Activated CD4-positive, alpha-beta T cell treated with anti-CD3 and anti-CD28 coated beads for 36 hours (primary cell): ENCODE measurements at regions of chr4 and their contacts with region 1.

Region 1: DNA sequence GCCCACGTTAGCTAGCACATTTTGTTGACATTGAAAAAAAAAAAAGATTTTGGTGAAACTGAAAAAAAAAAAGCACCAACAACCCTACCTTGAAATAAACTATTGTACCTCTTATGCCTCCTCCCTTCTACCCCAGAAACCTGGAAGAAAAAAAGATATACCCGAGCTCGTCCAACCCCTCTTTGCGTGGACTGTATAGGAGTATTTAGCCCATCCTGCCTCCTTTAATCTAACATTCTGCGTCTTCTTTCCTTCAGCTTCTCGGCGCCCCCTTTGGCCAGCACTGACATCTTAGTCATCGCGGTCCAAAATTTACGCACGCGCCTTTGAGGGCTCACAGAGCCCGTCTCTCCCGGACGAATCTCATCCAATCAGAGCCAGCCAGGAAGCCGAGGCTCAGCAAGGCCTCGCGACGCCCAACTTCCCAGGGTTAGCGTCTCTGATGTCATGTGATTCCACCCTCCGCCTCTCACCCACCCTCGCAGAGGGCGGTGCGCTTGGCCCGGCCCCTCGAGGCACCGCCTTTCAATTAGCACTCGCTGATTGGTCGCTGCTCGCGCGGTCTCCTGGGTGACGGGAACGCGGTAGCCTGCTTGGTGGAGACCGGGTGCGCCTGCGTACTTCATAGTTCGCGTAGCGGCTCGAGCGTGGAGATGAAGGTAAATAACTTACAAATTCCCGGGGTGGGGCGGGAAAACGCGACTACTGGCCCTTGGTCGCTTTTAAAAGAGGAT is at the start of gene WDR19:
- DNase-seq: peak; percentile 99
- ATAC-seq: peak; percentile 99
- H3K4me3 Mint-ChIP-seq: no peak within 1 kb of the TSS
- H3K27ac Mint-ChIP-seq: no peak within 1 kb of the TSS
- H3K4me1 Mint-ChIP-seq: peaks cover 8% of the 10 kb centered on the region
- H3K27me3 Mint-ChIP-seq: peaks cover 3% of the 10 kb centered on the region
- total RNA-seq, gene WDR19: 12.1 to 16.2 TPM

Region 2: DNA sequence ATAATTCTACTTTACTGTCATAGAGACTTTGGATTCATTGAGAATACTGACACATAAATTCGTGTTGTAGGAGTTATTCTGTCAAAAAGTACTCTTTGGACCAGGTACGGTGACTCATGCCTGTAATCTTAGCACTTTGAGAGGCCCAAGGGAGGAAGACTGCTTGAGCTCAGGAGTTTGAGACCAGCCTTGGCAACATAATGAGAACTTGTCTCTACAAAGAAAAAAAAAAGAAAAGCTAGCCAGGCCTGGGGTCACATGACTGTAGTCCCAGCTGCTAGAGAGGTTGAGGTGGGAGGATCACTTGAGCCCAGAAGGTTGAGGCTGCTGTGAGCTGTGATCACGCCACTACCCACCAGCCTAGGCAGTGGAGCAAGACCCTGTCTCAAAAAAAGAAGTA is 55.1 kb after region 1 on chr4:
- CTCF ChIA-PET with region 1: no interaction called
- POLR2A ChIA-PET with region 1: no interaction called
- intact Hi-C with region 1: no loop called
- DNase-seq: no peak
- ATAC-seq: no peak
- H3K4me3 Mint-ChIP-seq: no peak overlapping the region
- H3K27ac Mint-ChIP-seq: no peak overlapping the region
- H3K4me1 Mint-ChIP-seq: no peaks in the 10 kb centered on the region
- H3K27me3 Mint-ChIP-seq: no peaks in the 10 kb centered on the region

Region 3: GRCh38 chr4:39308611-39309010 is 126.5 kb after region 1 on chr4:
- CTCF ChIA-PET with region 1: no interaction called
- POLR2A ChIA-PET with region 1: no interaction called
- intact Hi-C with region 1: no loop called
- DNase-seq: no peak
- ATAC-seq: no peak
- H3K4me3 Mint-ChIP-seq: no peak overlapping the region
- H3K27ac Mint-ChIP-seq: no peak overlapping the region
- H3K4me1 Mint-ChIP-seq: no peaks in the 10 kb centered on the region
- H3K27me3 Mint-ChIP-seq: no peaks in the 10 kb centered on the region

Region 4: GRCh38 chr4:39365830-39366771 is 184.0 kb after region 1 on chr4 and contains the start of gene RFC1:
- CTCF ChIA-PET with region 1: interaction called, 4 read pairs
- POLR2A ChIA-PET with region 1: no interaction called
- intact Hi-C with region 1: loop called in 1 of 2 experiments (anchors 1 kb)
- DNase-seq: peak; percentile 97
- ATAC-seq: peak; percentile 90
- H3K4me3 Mint-ChIP-seq: peak within 1 kb of the TSS; percentile 98
- H3K27ac Mint-ChIP-seq: peak within 1 kb of the TSS; percentile 97
- H3K4me1 Mint-ChIP-seq: peaks cover 32% of the 10 kb centered on the region
- H3K27me3 Mint-ChIP-seq: no peaks in the 10 kb centered on the region
- total RNA-seq, gene RFC1: 112 to 216 TPM

Region 5: DNA sequence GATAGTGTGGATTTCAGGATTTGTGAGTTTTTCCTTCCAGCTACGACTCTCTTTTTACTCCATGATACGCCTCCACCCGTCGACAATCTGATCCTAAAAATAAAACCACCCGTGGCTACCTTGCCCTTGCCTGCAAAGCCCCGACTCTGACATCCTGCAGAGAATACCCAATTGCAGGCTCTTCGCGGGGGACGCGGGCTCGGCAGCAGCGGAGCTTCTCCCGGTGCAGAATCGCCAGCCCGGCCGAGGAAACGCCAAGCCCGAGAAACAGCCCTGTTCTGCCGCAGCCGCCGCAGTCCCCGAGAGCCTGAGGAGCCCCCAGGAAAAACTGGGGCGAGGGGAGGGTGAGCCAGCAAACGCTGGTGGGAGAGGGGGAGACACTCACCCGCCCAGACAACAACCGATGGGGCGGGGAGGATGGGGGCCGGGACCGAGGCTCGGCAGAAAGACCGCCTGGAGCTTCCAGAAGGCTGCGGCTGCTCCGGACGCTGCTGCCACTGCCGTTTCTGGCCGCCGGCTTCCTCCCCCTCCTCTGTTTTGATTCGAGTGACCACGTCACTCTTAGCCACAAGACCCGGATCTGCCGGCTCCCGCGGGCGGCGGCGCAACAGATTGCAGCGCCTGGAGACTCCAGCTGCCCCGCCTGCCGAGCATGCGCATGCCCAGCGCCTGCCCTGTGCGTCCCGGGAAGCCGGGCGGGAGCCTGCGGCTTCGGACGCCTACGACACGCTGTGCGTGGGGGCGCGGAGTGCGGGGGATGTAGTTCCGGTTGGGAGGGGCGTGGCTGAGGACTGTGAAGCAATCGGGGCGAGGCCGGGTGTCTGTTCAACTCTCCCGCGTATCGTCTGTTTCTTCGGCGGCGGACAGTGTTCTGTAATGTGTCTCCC is 456.5 kb after region 1 on chr4 and contains the start of gene SMIM14:
- CTCF ChIA-PET with region 1: no interaction called
- POLR2A ChIA-PET with region 1: no interaction called
- intact Hi-C with region 1: loop called in 1 of 2 experiments (anchors 1 kb)
- DNase-seq: peak; percentile 94
- ATAC-seq: peak; percentile 87
- H3K4me3 Mint-ChIP-seq: peak within 1 kb of the TSS; percentile 83
- H3K27ac Mint-ChIP-seq: peak within 1 kb of the TSS; percentile 86
- H3K4me1 Mint-ChIP-seq: peaks cover 33% of the 10 kb centered on the region
- H3K27me3 Mint-ChIP-seq: no peaks in the 10 kb centered on the region
- total RNA-seq, gene SMIM14: 1.4 to 2.0 TPM